T-cell (primary cell): ENCODE measurements at regions of chr2 and their contacts with region 1.

Region 1: GRCh38 chr2:4585057-4585635 is 881.8 kb downstream of the DCDC2C start:
- DNase-seq: no peak
- ATAC-seq: no peak
- H3K4me3 ChIP-seq: no peak overlapping the region
- H3K4me3 Mint-ChIP-seq: no peak overlapping the region
- H3K27ac ChIP-seq: no peak overlapping the region
- H3K27ac Mint-ChIP-seq: no peak overlapping the region
- H3K4me1 ChIP-seq: no peaks in the 10 kb centered on the region
- H3K4me1 Mint-ChIP-seq: no peaks in the 10 kb centered on the region
- H3K27me3 ChIP-seq: no peaks in the 10 kb centered on the region
- H3K27me3 Mint-ChIP-seq: no peaks in the 10 kb centered on the region

Region 2: GRCh38 chr2:4258563-4258962 is 326.6 kb before region 1 on chr2:
- CTCF ChIA-PET with region 1: no interaction called
- POLR2A ChIA-PET with region 1: no interaction called
- DNase-seq: no peak
- ATAC-seq: no peak
- H3K4me3 ChIP-seq: no peak overlapping the region
- H3K4me3 Mint-ChIP-seq: no peak overlapping the region
- H3K27ac ChIP-seq: no peak overlapping the region
- H3K27ac Mint-ChIP-seq: no peak overlapping the region
- H3K4me1 ChIP-seq: no peaks in the 10 kb centered on the region
- H3K4me1 Mint-ChIP-seq: no peaks in the 10 kb centered on the region
- H3K27me3 ChIP-seq: no peaks in the 10 kb centered on the region
- H3K27me3 Mint-ChIP-seq: no peaks in the 10 kb centered on the region

Region 3: GRCh38 chr2:4569098-4569497 is 16.0 kb before region 1 on chr2:
- CTCF ChIA-PET with region 1: no interaction called
- POLR2A ChIA-PET with region 1: interaction called in 1 of 2 experiments, 10 read pairs
- DNase-seq: no peak
- ATAC-seq: no peak
- H3K4me3 ChIP-seq: no peak overlapping the region
- H3K4me3 Mint-ChIP-seq: no peak overlapping the region
- H3K27ac ChIP-seq: no peak overlapping the region
- H3K27ac Mint-ChIP-seq: no peak overlapping the region
- H3K4me1 ChIP-seq: no peaks in the 10 kb centered on the region
- H3K4me1 Mint-ChIP-seq: no peaks in the 10 kb centered on the region
- H3K27me3 ChIP-seq: no peaks in the 10 kb centered on the region
- H3K27me3 Mint-ChIP-seq: no peaks in the 10 kb centered on the region